Calu3 (cell line): ENCODE measurements at regions of chr11 and their contacts with region 1.

Region 1: DNA sequence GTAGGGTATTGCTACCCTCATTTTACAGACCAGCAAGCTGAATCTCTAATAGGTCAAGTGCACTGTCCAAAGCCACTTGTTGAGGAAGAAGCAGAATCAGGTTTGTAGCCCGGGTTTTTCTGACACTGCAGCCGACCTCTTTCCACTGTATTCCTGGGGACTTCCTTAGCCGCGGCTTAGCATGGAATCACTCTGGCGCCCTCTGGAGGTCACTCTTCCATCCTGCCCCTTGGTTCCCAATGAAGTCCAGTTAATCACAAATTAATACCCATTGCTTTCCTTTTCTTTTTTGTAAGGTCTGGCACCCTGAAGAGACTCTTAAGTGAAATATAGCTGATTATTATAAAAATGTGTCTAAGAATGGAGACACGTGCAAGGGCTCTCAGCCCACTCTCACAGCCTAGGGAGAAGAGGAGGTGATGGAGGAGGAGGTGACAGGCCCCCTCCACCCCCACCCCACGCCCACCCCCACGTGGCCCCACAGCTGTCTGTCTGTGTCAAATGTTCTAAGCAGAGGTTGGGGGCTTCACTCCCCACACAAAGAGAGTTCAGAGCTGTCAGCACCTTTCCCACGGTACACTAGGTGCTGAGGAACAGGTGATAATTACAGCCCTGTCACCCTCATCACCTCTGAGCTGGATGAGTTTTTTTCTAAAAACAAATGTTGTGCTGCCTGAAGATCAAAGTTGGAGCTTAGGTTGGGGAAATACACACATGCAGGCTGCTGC is 57.7 kb upstream of the DRD2 start:
- DNase-seq: peak; percentile 73
- H3K4me3 Mint-ChIP-seq: no peak overlapping the region
- H3K27ac Mint-ChIP-seq: no peak overlapping the region
- H3K4me1 Mint-ChIP-seq: no peaks in the 10 kb centered on the region
- H3K27me3 Mint-ChIP-seq: no peaks in the 10 kb centered on the region
- CTCF ChIP-seq: peak; percentile 40

Region 2: DNA sequence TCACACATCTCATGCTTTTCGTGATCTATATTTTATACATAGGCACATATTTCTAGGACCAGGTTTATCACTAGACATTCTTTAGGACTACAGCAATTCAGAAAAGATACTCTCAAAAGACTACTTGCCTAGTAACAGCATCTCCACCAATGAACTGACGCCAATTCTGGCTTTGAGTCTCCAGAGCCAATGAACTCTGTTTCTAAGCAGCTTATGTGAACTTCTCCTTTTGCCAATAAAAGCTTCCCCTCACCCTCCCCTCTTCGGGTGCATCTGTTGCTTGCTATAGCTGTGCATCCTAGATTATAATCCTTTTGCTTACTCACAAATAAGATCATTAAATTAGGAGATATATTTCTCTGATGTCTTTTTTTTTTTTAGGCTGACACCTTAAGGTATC is 156.7 kb before region 1 on chr11:
- CTCF ChIA-PET with region 1: no interaction called
- intact Hi-C with region 1: loop called (anchors 10 kb)
- DNase-seq: no peak
- H3K4me3 Mint-ChIP-seq: no peak overlapping the region
- H3K27ac Mint-ChIP-seq: no peak overlapping the region
- H3K4me1 Mint-ChIP-seq: no peaks in the 10 kb centered on the region
- H3K27me3 Mint-ChIP-seq: no peaks in the 10 kb centered on the region
- CTCF ChIP-seq: no peak

Region 3: DNA sequence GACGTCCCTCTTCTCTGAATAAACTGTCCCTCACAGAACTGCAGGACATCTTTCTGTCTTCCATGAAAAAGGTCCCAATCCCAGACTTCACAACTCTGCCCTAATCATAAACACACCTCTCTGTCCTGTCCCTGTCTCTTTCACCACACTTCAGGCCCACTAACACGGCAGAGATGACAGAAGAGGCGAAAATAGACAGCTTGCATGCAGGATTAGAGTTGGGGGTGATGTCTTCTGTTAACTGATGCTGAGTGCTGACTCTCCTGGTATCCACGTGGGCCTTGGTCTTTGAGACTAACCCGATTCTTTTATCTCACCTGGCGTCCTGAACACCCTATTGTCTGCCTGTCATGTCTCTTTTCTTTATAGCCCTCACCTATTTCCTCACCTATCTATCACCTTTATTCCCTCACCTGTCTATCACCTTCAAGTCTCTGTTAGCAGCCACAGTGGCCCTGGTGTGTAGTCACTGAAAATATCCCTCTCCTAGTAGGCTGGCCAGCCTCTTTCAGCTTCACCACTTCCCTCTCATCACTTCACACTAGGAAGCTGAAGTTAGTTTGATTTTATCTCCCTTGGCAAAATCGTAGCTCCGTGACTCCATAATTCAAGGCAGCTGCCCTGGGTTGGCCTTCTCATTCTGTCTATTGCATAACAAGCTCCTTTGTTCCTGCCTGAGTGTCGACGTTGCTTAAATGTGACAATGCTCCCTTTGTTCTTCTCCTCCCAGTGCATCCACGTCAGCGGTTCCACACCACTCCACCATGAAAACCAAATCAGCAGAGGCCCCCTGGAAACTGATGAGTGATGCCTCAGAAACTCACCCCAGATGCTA is 27.1 kb before region 1 on chr11:
- CTCF ChIA-PET with region 1: no interaction called
- intact Hi-C with region 1: no loop called
- DNase-seq: peak; percentile 60
- H3K4me3 Mint-ChIP-seq: peak overlapping the region; percentile 27
- H3K27ac Mint-ChIP-seq: peak overlapping the region; percentile 98
- H3K4me1 Mint-ChIP-seq: peaks cover 22% of the 10 kb centered on the region
- H3K27me3 Mint-ChIP-seq: no peaks in the 10 kb centered on the region
- CTCF ChIP-seq: no peak

Region 4: GRCh38 chr11:113715882-113716625 is 183.2 kb after region 1 on chr11:
- CTCF ChIA-PET with region 1: no interaction called
- intact Hi-C with region 1: no loop called
- DNase-seq: no peak
- H3K4me3 Mint-ChIP-seq: no peak overlapping the region
- H3K27ac Mint-ChIP-seq: no peak overlapping the region
- H3K4me1 Mint-ChIP-seq: no peaks in the 10 kb centered on the region
- H3K27me3 Mint-ChIP-seq: no peaks in the 10 kb centered on the region
- CTCF ChIP-seq: no peak